Cardiac septum (tissue), 1 donor: ENCODE measurements at regions of chr18 and their contacts with region 1.

Region 1: GRCh38 chr18:3869848-3870247 is 419.9 kb downstream of the TGIF1 start:
- DNase-seq: no peak

Region 2: DNA sequence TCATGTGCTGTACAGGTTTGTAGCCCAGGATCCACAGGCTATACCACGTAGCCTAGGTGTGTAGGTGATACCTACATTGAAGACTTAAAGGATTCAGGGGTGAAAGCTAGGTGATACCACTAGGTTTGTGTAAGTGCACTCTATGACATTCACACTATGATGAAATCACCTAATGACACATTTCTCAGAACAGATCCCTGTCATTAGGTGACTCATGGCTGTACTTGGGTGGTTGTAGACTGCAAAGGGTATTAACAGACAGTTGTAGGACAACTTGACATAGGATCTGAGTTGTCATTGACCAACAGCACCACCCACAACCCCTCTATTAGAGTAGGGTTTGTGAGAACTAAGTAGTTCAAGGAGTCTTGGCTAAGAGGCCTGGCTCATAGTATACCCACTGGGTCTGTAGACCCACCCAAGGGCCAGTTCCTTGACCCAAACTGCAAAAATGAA is 1242.0 kb before region 1 on chr18:
- intact Hi-C with region 1: no loop called
- DNase-seq: no peak

Region 3: DNA sequence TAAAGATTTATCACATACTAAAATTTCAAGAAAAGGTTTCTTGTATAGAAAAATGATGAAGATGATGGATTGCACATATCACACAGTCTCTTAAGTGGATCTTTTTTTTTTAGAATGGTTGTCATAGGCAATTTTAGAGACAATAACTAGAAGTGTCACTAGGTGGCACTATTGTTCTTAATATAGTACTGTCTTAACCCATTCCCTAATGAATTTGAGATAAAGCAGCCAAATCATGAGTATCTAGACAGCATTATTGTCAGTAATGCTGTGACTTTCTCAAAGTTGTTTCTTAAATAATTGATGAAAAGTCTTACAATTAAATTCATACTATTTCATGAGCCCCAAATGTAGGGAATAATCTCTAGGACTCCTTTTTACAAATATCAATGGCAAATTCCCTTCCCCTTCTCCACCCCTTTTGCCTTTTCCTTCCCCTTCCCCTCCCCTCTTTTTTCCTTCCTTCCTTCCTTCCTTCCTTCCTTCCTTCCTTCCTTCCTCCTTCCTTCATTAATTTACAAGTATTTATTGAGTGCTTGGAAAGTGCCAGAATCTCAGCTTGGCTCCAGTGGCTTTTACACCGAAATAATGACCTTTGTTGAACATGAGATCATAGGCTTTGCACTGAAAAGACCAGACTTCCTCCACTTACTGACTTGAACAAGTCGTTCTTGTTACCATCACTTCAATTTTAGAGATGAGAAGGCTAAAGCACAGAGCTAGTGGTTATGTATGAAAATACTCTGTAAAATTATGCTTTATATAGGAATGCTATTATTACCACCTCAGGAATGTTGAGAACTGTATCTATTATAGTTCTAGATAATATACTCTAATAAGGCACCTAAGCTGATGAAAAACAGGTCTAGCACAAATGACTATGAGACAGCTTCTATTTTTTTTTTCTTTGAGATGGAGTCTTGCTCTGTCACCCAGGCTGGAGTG is 588.1 kb before region 1 on chr18:
- intact Hi-C with region 1: loop called (anchors 5 kb)
- DNase-seq: no peak

Region 4: DNA sequence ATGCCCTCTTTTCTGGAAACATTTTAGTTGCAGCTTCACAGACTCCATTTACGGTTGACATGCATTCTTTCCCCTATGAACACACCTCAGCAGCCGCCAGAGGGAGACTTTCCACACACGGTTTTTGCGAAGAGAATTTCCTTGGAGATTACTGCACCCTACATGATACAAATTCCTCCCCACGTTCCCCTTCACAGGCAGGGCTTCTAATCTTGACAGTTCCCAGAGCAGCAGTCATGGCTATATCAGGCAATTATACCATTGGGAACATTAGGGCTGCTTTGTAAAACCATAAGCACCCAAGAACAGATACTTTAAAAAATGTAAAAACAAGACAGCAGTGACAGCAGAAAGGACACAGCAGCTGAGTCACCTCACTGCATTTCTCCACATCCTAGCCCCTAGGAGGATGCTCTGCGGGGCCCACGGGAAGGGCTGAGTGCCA is 166.1 kb before region 1 on chr18:
- intact Hi-C with region 1: loop called (anchors 5 kb)
- DNase-seq: no peak

Region 5: GRCh38 chr18:3806656-3807055 is 63.2 kb before region 1 on chr18:
- intact Hi-C with region 1: no loop called
- DNase-seq: no peak

Region 6: DNA sequence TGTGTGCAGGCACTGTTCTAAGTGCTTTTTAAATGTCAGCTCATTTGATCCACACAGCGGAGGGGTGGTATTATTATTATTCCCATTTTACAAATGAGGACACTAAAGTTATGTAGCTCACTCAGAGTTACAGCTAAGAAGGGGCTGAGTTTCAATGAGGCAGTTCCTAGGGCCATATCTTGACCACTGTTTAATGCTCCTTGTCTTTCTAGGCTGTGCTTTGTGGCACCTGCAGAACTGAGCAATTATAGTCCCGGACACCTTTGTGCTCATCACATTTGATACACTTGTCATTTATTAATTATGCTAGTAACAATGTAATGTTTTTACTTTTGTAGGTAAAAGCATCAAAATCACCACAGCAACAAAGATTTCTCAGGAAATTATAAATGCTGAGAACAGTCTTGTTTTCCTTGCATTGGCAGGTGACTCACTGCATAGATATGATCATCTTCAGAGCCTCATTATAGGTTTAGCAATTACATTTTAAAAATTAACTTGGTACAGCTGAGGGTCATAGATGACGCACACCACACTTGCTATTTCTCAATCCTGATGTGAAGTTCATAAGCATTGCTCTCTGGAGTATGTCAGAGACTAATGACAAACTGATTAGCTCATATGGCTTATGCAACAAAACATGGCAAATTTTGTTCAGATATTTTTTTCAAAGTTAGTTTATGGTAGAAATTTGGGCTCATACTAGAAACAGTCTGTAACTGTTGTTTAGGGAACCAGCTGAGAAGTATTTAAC is 53.1 kb before region 1 on chr18:
- intact Hi-C with region 1: no loop called
- DNase-seq: no peak

Region 7: GRCh38 chr18:3966985-3967856 is 97.4 kb after region 1 on chr18:
- intact Hi-C with region 1: loop called (anchors 5 kb)
- DNase-seq: peak; percentile 83

Region 8: GRCh38 chr18:3995476-3996102 is 125.7 kb after region 1 on chr18:
- intact Hi-C with region 1: loop called (anchors 5 kb)
- DNase-seq: no peak

Region 9: DNA sequence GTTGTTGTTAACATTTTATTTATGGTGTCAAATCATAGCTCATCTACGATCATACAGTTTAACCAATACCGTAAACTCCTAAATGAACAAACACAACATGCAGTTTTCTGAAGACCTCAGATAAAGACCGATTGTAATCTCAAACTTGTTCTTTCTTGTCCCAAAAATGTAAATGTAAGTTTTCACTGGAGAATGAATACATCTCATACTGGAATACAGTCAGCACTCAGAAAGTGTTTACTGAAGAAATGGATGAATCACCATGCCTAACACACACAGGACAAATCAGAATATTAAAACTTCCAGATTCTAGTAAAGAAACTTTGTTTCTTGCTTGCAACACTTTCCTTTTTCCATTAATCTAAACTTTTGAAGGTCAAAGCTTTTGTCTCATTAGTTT is 204.8 kb after region 1 on chr18:
- intact Hi-C with region 1: no loop called
- DNase-seq: no peak